Sigmoid colon (tissue), 7 donors: ENCODE measurements at regions of chr11 and their contacts with region 1.

Region 1: GRCh38 chr11:62108017-62108750 is 15.6 kb upstream of the INCENP start:
- DNase-seq: no peak
- H3K4me3 ChIP-seq: no peak overlapping the region
- H3K27ac ChIP-seq: no peak overlapping the region
- H3K4me1 ChIP-seq: peaks cover 0 to 39% (median 29%) of the 10 kb centered on the region in 4 donors
- H3K27me3 ChIP-seq: no peaks in the 10 kb centered on the region
- CTCF ChIP-seq: peak; percentile 59 to 86 (median 79)
- EP300 ChIP-seq: no peak
- POLR2A ChIP-seq: no peak

Region 2: DNA sequence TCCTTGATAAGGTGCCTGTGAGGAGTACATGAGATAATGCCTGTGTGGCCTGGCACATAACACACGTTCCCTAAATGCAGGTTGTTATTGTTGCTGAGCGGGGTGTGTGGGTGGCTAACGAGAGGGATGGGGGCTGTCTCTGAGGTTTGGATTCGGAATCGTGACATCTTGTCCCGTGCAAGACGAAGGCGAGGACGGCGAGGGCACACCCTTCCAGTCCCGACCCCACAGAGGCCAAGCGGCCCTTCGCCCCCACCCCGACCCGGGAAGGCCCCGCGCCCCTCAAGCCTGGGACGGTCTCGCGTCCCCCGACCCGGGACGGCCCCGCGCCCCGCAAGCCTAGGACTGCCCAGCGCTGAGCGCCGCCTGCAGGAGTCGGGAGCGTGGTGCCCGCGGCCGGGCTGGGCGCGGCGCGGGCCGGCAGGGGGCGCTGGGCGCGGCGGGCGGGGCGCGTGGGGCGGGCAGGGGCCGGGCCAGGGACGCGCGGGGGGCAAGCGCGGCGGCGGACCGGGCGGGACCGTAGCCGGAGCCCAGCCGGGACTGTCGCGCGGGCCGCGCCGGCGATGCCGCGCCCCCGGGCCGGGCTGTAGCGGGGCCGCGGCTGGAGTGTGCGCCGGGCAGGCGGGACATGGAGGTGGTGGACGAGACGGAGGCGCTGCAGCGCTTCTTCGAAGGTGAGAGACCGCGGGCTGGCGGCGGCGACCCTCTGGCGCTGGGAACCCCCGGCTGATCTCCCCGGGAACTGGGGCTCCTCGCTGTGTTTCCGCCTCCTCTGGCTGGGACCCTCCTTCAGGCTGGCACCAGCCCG is 355.9 kb before region 1 on chr11 and contains the start of gene MYRF:
- intact Hi-C with region 1: loop called (anchors 5 kb)
- DNase-seq: no peak
- H3K4me3 ChIP-seq: peak within 1 kb of the TSS; percentile 21 to 52 (median 46)
- H3K27ac ChIP-seq: no peak within 1 kb of the TSS
- H3K4me1 ChIP-seq: peaks cover 0 to 13% (median 10%) of the 10 kb centered on the region in 4 donors
- H3K27me3 ChIP-seq: peaks cover 9 to 35% (median 10%) of the 10 kb centered on the region in 3 donors
- CTCF ChIP-seq: peak in 3 of 4 experiments; percentile 14 to 34 (median 26)
- EP300 ChIP-seq: no peak
- POLR2A ChIP-seq: no peak
- total RNA-seq, gene MYRF: under 0.01 to 0.83 (median 0.60) TPM

Region 3: GRCh38 chr11:61841636-61842527 is 266.3 kb before region 1 on chr11:
- intact Hi-C with region 1: no loop called
- DNase-seq: no peak
- H3K4me3 ChIP-seq: no peak overlapping the region
- H3K27ac ChIP-seq: no peak overlapping the region
- H3K4me1 ChIP-seq: no peaks in the 10 kb centered on the region
- H3K27me3 ChIP-seq: no peaks in the 10 kb centered on the region
- CTCF ChIP-seq: no peak
- EP300 ChIP-seq: no peak
- POLR2A ChIP-seq: no peak

Region 4: GRCh38 chr11:61967116-61967923 is 140.9 kb before region 1 on chr11 and contains the start of gene FTH1:
- intact Hi-C with region 1: loop called (anchors 5 kb)
- DNase-seq: peak; percentile 97
- H3K4me3 ChIP-seq: peak within 1 kb of the TSS; percentile 83 to 97 (median 90)
- H3K27ac ChIP-seq: peak within 1 kb of the TSS; percentile 99 to 100 (median 100)
- H3K4me1 ChIP-seq: peaks cover 0 to 77% (median 76%) of the 10 kb centered on the region in 4 donors
- H3K27me3 ChIP-seq: no peaks in the 10 kb centered on the region
- CTCF ChIP-seq: no peak
- EP300 ChIP-seq: peak in 1 of 4 donors; percentile 32
- POLR2A ChIP-seq: peak; percentile 96 to 97
- total RNA-seq, gene FTH1: 1,709 to 2,375 (median 1,954) TPM